BJ (cell line): ENCODE measurements at regions of chr2 and their contacts with region 1.

Region 1: GRCh38 chr2:71798266-71799012 is 345.1 kb downstream of the DYSF start:
- DNase-seq: no peak
- H3K4me3 ChIP-seq: no peak overlapping the region
- H3K27me3 ChIP-seq: no peaks in the 10 kb centered on the region
- CTCF ChIP-seq: peak; percentile 89

Region 2: DNA sequence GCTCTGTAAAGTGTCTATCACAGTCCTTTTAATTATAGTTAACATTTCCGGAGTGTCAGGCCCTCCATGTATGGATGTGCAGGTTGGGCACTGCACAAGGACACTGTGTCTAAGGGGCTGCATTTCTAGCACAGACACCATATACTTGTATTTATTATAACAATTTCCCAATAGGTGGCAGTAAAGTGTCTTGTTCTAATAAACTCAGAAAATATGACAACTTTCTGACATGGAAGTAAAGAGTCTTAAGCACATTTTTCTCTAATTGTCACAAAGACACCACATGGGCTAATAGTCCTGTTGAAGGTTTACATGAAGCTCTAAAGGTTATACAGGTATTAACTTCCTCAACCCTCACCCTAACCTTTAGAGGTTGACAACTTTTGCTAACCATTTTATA is 188.5 kb before region 1 on chr2:
- CTCF ChIA-PET with region 1: interaction called, 175 read pairs
- POLR2A ChIA-PET with region 1: no interaction called
- DNase-seq: no peak
- H3K4me3 ChIP-seq: no peak overlapping the region
- H3K27me3 ChIP-seq: peaks cover 18% of the 10 kb centered on the region
- CTCF ChIP-seq: no peak

Region 3: DNA sequence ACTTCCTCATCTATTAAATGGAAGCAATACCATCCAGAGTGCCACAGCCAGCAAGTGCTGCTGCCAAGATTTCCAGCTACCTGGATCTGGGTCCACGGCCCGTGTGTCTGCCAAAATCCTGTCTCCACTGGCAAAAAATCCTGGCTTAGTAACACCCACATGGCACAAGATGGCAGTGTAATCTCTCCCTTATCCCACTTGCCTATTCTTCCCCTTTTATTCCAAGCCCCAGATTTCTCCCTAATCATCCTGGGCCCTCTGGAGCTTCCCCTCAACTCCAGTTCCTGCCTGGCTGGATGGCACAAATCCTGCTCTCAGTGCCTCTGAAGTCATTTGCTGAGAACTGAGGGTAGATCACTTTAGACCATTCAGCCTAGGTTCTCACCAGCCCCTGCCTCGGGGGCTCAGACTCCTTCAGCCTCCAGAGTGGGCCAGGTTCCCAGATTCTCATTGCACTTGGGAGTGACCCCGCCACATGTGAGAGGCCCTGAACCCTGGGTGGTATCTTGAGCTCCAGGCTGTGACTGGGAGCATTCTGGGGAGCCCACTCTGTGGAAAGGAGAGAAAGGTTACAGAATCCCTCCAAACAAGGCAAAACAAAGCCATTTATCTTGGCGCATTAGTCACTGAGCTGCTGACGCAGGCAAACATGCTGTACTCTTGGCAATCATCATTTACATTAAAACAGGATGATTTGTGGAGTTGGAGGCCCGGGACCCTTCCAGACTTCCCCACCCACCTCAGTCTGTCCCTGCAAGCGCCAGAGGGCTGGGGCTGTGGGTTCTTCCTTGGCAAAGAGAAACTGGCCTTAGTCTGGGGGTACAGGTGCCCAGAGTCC is 19.3 kb before region 1 on chr2:
- CTCF ChIA-PET with region 1: interaction called, 27 read pairs
- POLR2A ChIA-PET with region 1: no interaction called
- DNase-seq: no peak
- H3K4me3 ChIP-seq: no peak overlapping the region
- H3K27me3 ChIP-seq: peaks cover 7% of the 10 kb centered on the region; the same call in 1 of the 2 replicates
- CTCF ChIP-seq: peak; percentile 37

Region 4: DNA sequence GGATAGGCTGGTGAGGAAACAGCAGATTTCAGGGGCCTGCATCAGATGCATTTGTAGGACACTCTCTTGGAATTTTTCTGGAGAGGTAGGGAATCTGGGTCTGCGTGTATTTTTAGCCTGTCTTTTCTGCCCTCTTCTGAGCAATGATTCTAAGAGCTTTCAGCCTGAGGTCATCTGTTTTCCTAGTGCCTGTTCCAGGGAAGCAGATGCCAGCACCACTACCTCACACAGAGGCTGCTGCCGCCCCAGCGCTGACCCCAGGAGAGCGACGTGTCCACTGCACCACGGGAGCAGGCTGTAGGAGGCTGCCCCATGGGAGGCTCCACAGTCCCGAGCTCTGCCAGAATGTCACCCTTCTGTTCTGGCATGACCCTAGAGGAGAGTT is 32.7 kb after region 1 on chr2:
- CTCF ChIA-PET with region 1: interaction called, 22 read pairs
- POLR2A ChIA-PET with region 1: no interaction called
- DNase-seq: peak; percentile 92
- H3K4me3 ChIP-seq: no peak overlapping the region
- H3K27me3 ChIP-seq: no peaks in the 10 kb centered on the region
- CTCF ChIP-seq: no peak

Region 5: GRCh38 chr2:72035518-72036172 is 237.2 kb after region 1 on chr2:
- CTCF ChIA-PET with region 1: no interaction called
- POLR2A ChIA-PET with region 1: no interaction called
- DNase-seq: no peak
- H3K4me3 ChIP-seq: no peak overlapping the region
- H3K27me3 ChIP-seq: peaks cover 6% of the 10 kb centered on the region
- CTCF ChIP-seq: no peak

Region 6: DNA sequence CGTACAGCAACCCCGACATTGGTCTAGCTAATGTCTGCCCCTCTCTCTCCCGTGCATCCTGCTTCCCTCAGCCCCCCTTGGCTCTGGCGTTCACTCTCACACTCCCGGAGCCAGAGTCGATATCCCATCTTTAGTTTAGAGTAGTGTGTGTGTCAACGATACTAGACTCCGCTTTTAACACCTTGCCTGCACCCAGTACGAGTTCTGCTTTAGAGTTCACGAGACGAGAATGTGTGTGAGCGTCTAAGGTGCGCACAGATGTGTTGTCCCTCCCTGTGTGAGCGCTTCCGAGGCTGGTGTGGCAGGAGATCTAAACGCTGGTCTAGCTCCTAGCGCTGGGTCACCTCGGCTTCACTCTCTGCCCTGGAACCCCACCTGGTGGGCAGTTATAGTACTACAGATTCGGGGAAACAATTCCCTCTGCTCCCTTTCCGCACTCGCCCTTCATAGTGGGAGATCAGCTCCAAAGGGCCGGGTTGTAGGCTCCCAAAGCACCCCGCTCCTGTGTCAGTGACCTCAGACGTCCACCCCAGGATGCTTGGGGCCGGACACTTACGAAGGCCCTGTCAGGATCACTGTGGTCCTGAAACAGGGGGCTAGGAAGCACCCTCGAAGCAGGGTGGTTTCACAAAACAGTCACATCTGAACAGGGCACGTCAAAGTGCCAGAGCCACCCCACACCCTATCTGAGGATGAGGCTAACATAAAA is 351.9 kb after region 1 on chr2:
- CTCF ChIA-PET with region 1: interaction called, 213 read pairs
- POLR2A ChIA-PET with region 1: interaction called, 7 read pairs
- DNase-seq: no peak
- H3K4me3 ChIP-seq: no peak overlapping the region
- H3K27me3 ChIP-seq: peaks cover 49% of the 10 kb centered on the region
- CTCF ChIP-seq: peak; percentile 80

Region 7: DNA sequence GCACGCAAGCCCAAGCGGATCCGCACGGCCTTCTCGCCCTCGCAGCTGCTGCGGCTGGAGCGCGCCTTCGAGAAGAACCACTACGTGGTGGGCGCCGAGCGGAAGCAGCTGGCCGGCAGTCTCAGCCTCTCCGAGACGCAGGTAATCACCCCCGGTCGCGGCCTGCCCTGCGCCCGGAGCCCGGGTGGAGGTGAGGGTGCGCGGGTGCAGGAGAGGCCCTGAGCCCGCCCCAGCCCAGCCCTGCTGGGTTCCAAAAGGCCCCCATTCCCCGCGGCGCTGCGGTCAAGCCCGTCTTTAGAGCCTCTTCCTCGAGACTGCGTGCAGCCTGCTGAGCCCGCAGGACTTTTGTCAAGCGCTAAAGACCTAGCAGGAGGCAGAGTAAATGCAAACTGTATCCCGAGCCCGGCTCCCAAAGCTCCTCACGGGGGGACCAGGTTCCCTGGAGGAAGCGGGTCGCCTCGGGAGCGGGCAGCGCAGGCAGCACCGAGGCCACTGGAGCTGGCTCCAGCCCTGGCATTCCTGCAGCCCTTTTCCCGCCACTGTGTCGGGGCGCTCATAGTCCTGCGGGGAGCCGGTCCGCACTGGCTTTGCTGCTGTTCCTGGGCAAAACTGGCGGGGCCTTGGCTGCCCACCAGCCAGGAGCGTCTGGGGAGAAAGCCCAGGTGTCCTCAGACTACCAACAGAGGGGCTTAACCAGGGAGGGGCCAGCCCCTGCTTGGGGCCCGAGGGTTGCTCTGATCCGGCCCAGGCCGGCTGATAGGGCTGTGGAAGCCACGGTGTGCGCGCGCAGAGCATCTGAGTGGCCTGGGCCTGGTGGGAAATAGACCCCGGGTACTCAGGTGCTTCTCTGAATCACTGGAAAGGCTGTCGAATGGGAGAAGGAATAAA is 1126.2 kb after region 1 on chr2:
- CTCF ChIA-PET with region 1: no interaction called
- POLR2A ChIA-PET with region 1: no interaction called
- DNase-seq: no peak
- H3K4me3 ChIP-seq: no peak overlapping the region
- H3K27me3 ChIP-seq: peaks cover 83% of the 10 kb centered on the region
- CTCF ChIP-seq: no peak